Right ventricle myocardium inferior (tissue), 1 donor: ENCODE measurements at regions of chr4 and their contacts with region 1.

Region 1: GRCh38 chr4:185134307-185134869 is 8.7 kb upstream of the SLC25A4 start:
- DNase-seq: no peak
- ATAC-seq: peak; percentile 42

Region 2: DNA sequence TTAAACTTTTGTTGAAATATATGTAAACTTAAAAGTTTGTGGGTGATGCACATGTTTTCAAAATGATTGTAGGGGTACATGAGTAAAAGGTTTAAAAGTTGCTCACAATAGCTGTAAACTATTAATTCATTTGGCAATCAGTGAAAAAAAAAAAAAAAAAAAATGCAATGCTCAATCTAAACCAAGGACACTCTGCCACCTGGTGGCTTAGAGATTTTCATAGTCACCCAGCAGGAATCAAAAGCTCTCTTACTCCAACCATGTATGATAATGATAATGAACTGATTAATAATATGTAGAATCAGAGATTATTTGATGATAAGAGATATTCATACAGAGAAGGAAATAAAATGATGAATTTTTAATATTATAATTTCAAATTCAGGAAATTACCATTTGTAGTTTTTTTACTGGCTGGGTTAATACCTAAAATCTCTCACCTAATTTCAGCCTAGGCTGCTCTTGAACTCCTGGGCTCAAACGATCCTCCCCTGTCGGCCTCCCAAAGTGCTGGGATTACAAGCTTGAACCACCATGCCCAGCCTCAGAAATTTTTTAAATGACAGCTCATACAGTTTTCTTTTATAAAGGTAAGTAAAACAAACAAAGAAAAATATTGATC is 38.2 kb before region 1 on chr4:
- intact Hi-C with region 1: loop called (anchors 2 kb)
- DNase-seq: no peak
- ATAC-seq: no peak